A549 (cell line): ENCODE measurements at regions of chr5 and their contacts with region 1.

Region 1: GRCh38 chr5:134145779-134146581 is 30.8 kb downstream of the SKP1 start:
- DNase-seq: peak; percentile 53 to 80
- ATAC-seq: peak; percentile 74 to 90
- H3K4me3 ChIP-seq: no peak overlapping the region
- H3K27ac ChIP-seq: no peak overlapping the region
- H3K4me1 ChIP-seq: peaks cover 8% of the 10 kb centered on the region; the same call in 2 of the 3 replicates
- CTCF ChIP-seq: peak; percentile 60
- EP300 ChIP-seq: no peak
- POLR2A ChIP-seq: no peak
- RAD21 ChIP-seq: peak; percentile 40 to 54; a peak in 4 of 5 replicates

Region 2: GRCh38 chr5:134113902-134114875 is 31.8 kb before region 1 on chr5 and contains the start of gene TCF7:
- CTCF ChIA-PET with region 1: interaction called, 263 read pairs
- POLR2A ChIA-PET with region 1: no interaction called
- DNase-seq: peak; percentile 76 to 91
- ATAC-seq: peak; percentile 83 to 94
- H3K4me3 ChIP-seq: peak within 1 kb of the TSS; percentile 82
- H3K27ac ChIP-seq: peak within 1 kb of the TSS; percentile 69 to 87
- H3K4me1 ChIP-seq: peaks cover 4% of the 10 kb centered on the region; the same call in 1 of the 3 replicates
- CTCF ChIP-seq: no peak
- EP300 ChIP-seq: no peak
- POLR2A ChIP-seq: peak; percentile 58
- RAD21 ChIP-seq: no peak
- polyA plus RNA-seq, gene TCF7: 2.8 and 3.7 TPM in 2 replicates

Region 3: GRCh38 chr5:134249469-134250379 is 103.7 kb after region 1 on chr5:
- CTCF ChIA-PET with region 1: no interaction called
- POLR2A ChIA-PET with region 1: no interaction called
- DNase-seq: peak in 1 of 2 experiments; percentile 45
- ATAC-seq: 0 out of 6 replicates have a peak, but pooled peaks of 1 of the 2 experiments have one; percentile 7
- H3K4me3 ChIP-seq: no peak overlapping the region
- H3K27ac ChIP-seq: peak overlapping the region; percentile 10 to 35; a peak in 4 of 6 replicates
- H3K4me1 ChIP-seq: peaks cover 57% of the 10 kb centered on the region
- CTCF ChIP-seq: no peak
- EP300 ChIP-seq: no peak
- POLR2A ChIP-seq: no peak
- RAD21 ChIP-seq: no peak